GM10248 (cell line): ENCODE measurements at regions of chr1 and their contacts with region 1.

Region 1: GRCh38 chr1:157505481-157506272 is 46.6 kb downstream of the FCRL5 start:
- DNase-seq: peak; percentile 75
- CTCF ChIP-seq: peak; percentile 84

Region 2: DNA sequence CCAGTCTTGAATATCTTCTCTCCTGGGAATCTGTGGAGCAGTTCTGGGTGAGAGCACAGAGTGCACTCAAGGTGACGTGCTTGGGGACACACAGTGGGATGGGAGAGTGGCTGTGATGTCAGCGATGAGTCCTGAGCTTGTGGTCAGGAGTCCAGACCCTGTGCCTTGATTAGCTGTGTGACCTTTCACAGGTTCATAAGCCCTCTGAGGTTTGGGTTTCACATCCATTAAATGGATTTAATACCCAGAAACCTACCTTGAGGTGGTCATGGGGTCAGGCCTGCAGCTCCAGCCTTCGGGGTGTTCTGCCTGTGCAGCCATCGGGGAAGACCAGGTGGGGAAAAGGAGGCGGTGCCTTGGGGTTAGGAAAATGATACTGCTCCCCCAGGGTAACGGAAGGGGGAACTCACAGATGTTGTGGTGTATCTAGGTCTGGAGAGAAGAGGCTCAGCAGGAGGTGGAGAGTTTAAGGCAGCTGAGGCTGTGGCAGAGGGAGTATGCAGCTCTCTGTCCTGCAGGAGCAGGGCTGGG is 329.0 kb before region 1 on chr1:
- CTCF ChIA-PET with region 1: interaction called, 13 read pairs
- POLR2A ChIA-PET with region 1: no interaction called
- DNase-seq: peak; percentile 41
- CTCF ChIP-seq: no peak

Region 3: DNA sequence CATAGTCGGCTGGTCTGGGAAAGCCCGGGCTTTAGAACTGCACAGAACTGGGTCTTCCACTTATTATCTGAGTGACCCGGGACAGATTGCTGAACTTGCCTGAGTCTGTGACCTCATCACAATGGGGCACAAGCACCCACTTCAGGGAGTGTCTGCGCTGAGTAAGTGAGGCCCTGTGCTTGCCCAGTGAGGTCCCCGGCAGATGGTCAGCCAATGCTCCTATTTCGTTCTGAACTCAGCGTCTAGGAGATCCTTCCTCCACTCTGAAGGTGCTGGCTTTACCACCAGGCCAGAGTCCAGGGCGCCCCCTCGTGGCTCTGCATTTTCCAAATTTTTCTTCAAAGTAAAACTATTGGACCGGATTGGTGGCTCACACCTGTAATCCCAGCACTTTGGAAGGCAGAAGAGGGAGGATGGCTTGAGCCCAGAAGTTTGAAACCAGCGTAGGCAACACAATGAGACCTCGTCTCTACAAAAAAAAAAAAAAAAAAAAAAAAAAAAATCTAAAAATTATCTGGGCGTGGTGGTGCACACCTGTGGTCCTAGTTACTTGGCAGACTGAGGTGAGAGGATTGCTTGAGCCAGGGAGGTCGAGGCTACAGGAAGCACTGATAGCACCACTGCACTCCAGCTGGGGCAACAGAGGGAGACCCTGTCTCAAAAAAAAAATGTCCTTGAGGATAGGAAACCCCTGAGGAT is 15.1 kb before region 1 on chr1:
- CTCF ChIA-PET with region 1: interaction called, 42 read pairs
- POLR2A ChIA-PET with region 1: no interaction called
- DNase-seq: peak; percentile 54
- CTCF ChIP-seq: peak; percentile 72

Region 4: DNA sequence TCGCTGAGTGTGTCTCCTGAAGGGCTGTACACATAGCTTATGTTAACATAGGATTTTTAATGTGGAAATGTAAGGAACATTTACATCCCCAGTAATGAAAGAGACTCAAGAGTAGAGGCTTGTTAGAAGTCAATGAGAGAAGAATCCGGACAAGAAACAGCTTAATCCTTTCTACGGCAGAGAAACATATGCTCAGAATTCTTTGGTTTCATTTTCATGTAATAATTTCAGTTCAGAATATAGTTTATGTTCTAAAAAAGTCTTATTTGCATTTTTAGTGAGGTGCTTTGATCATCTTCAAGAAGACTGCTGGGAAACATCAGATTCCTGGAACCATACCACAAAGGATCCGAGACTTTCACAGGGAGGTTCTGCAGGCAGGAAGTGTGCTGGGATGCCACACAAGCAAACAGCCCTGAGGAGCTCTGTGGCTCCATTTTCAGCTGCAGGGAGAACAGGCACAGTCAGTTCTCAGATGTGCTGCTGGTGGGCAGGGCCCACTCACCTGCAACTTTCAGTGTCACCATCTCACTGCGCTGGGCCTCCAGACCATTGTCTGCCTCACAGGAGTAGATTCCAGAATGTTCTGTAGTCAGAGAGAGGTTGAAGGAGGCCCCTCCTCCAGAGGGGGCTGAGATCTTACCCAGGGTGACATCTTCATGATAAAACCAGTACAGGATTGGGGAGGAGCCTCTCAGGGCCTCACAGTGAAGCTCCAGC is 18.3 kb after region 1 on chr1:
- CTCF ChIA-PET with region 1: interaction called, 11 read pairs
- POLR2A ChIA-PET with region 1: no interaction called
- DNase-seq: peak; percentile 48
- CTCF ChIP-seq: no peak

Region 5: DNA sequence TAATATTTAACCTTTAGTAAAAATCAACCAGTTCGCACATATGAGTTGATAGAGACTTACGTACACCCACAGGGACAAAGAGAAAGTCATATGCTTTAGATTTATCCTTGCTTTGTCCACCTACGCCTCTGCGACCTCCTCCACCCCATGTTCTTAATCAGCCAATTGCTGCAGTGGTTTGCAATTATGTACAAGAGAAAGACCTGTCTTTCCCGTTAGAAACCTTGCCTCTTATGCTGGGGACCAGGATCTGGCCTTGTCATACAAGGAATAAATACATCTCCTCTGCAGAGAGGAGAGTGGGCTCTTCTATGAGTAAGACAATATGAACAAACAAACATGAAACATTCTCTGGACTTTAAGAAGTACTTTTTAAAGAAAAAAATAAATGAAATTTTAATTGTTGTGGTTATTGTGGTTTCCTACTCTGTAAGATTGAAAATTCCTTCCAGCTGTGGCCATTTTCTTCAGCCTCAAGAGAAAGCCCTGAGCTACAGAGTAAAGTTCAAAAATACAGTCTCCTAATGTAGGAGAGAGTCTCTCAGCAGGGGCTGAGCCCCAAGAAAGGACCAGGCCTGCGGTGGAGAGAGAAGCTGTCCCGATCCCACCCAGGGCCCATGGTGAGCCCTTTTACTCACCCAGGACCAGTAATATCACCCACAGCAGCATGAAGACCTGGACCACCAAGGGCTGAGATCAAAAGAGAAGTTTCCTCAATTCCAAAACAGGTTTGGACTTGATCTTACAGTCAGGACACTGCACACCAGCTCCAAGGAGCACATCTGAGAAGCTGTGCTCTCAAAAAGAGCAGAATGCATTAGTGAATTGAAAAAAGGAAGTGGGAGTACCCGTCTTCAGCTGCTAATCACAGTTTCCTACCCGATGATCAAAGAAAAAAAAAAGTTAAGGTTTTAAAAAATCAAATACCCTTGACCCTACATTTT is 46.3 kb after region 1 on chr1 and contains the start of gene FCRL5:
- CTCF ChIA-PET with region 1: interaction called, 11 read pairs
- POLR2A ChIA-PET with region 1: no interaction called
- DNase-seq: peak; percentile 28
- CTCF ChIP-seq: no peak

Region 6: GRCh38 chr1:157878059-157878458 is 372.4 kb after region 1 on chr1:
- CTCF ChIA-PET with region 1: no interaction called
- POLR2A ChIA-PET with region 1: no interaction called
- DNase-seq: peak; percentile 13
- CTCF ChIP-seq: peak; percentile 19